B cell (primary cell): ENCODE measurements at regions of chr18 and their contacts with region 1.

Region 1: DNA sequence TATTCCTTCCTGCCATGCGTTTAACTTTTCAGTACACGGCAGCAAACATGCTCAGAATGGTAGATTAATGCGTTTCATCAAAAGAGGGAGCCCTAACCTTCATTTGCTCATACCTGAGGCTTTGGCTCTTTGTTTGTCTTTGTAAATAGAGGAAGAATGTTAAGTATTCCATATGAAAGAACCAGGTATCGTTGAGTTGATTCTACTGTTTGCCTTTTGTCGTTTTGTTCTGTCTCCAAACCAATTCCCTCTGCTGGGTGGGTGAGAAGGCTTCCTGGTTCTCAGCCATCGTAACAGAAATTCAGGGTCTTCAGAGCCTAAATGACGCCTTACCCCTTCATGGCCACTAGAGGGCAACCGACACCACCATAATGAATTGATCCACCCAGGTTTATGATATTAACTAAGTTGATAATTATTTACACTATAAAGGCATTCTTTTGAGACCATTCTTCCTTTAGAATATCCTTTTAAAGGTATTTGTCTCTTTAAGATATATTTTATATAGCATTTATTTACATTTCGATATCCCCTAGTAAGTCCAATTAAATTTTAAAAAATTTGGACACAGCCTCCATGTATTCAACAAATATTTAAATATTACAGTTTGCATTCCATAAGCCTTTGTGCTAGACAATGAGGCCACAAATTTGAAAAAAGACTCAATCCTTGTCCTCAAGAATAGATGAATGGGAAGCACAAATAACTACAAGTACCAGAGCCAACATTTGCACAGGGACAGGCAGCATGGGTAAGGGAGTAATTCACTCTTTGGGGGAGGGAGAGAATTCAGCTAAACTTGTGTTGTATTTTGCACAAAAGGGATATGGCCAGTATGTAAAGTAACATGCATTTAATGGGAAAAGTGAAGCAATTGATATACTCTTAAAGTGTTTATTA is 48.1 kb downstream of the TIMM21 start:
- DNase-seq: peak; percentile 86
- ATAC-seq: peak; percentile 92
- H3K4me3 ChIP-seq: peak overlapping the region; percentile 9 to 79 (median 45)
- H3K4me3 Mint-ChIP-seq: peak overlapping the region; percentile 82
- H3K27ac ChIP-seq: peak overlapping the region in 1 of 2 donors; percentile 71
- H3K27ac Mint-ChIP-seq: peak overlapping the region; percentile 84
- H3K4me1 ChIP-seq: peaks cover 0 to 11% of the 10 kb centered on the region in 2 donors
- H3K4me1 Mint-ChIP-seq: peaks cover 18% of the 10 kb centered on the region
- H3K27me3 ChIP-seq: no peaks in the 10 kb centered on the region
- H3K27me3 Mint-ChIP-seq: peaks cover 17% of the 10 kb centered on the region
- CTCF ChIP-seq: peak; percentile 95

Region 2: GRCh38 chr18:72985686-72986085 is 1210.8 kb before region 1 on chr18:
- CTCF ChIA-PET with region 1: no interaction called
- POLR2A ChIA-PET with region 1: no interaction called
- intact Hi-C with region 1: no loop called
- DNase-seq: no peak
- ATAC-seq: no peak
- H3K4me3 ChIP-seq: no peak overlapping the region
- H3K4me3 Mint-ChIP-seq: no peak overlapping the region
- H3K27ac ChIP-seq: no peak overlapping the region
- H3K27ac Mint-ChIP-seq: no peak overlapping the region
- H3K4me1 ChIP-seq: no peaks in the 10 kb centered on the region
- H3K4me1 Mint-ChIP-seq: no peaks in the 10 kb centered on the region
- H3K27me3 ChIP-seq: no peaks in the 10 kb centered on the region
- H3K27me3 Mint-ChIP-seq: no peaks in the 10 kb centered on the region
- CTCF ChIP-seq: no peak

Region 3: GRCh38 chr18:74147779-74148542 is 48.5 kb before region 1 on chr18 and contains the starts of genes FBXO15 and TIMM21:
- CTCF ChIA-PET with region 1: interaction called, 3 read pairs
- POLR2A ChIA-PET with region 1: no interaction called
- intact Hi-C with region 1: loop called (anchors 5 kb)
- DNase-seq: peak; percentile 98
- ATAC-seq: peak; percentile 84
- H3K4me3 ChIP-seq: peak within 1 kb of the TSS; percentile 75 to 99 (median 89)
- H3K4me3 Mint-ChIP-seq: peak within 1 kb of the TSS; percentile 94
- H3K27ac ChIP-seq: peak within 1 kb of the TSS; percentile 95 to 99
- H3K27ac Mint-ChIP-seq: peak within 1 kb of the TSS; percentile 100
- H3K4me1 ChIP-seq: peaks cover 15 to 21% of the 10 kb centered on the region in 2 donors
- H3K4me1 Mint-ChIP-seq: peaks cover 36% of the 10 kb centered on the region
- H3K27me3 ChIP-seq: no peaks in the 10 kb centered on the region
- H3K27me3 Mint-ChIP-seq: peaks cover 7% of the 10 kb centered on the region
- CTCF ChIP-seq: peak; percentile 1
- total RNA-seq, gene FBXO15: 3.7 and 4.1 TPM in 2 replicates
- total RNA-seq, gene TIMM21: 24.3 and 25.0 TPM in 2 replicates

Region 4: GRCh38 chr18:74264303-74265020 is 68.0 kb after region 1 on chr18:
- CTCF ChIA-PET with region 1: interaction called, 14 read pairs
- POLR2A ChIA-PET with region 1: no interaction called
- intact Hi-C with region 1: no loop called
- DNase-seq: peak; percentile 68
- ATAC-seq: peak; percentile 99
- H3K4me3 ChIP-seq: peak overlapping the region in 1 of 5 experiments; percentile 23
- H3K4me3 Mint-ChIP-seq: peak overlapping the region; percentile 73
- H3K27ac ChIP-seq: peak overlapping the region; percentile 67 to 79
- H3K27ac Mint-ChIP-seq: peak overlapping the region; percentile 95
- H3K4me1 ChIP-seq: peaks cover 6 to 17% of the 10 kb centered on the region in 2 donors
- H3K4me1 Mint-ChIP-seq: peaks cover 35% of the 10 kb centered on the region
- H3K27me3 ChIP-seq: no peaks in the 10 kb centered on the region
- H3K27me3 Mint-ChIP-seq: no peaks in the 10 kb centered on the region
- CTCF ChIP-seq: no peak

Region 5: GRCh38 chr18:74334242-74334893 is 137.9 kb after region 1 on chr18:
- CTCF ChIA-PET with region 1: interaction called, 196 read pairs
- POLR2A ChIA-PET with region 1: no interaction called
- intact Hi-C with region 1: no loop called
- DNase-seq: peak; percentile 72
- ATAC-seq: peak; percentile 88
- H3K4me3 ChIP-seq: no peak overlapping the region
- H3K4me3 Mint-ChIP-seq: peak overlapping the region; percentile 61
- H3K27ac ChIP-seq: peak overlapping the region; percentile 51 to 78
- H3K27ac Mint-ChIP-seq: peak overlapping the region; percentile 92
- H3K4me1 ChIP-seq: peaks cover 22 to 24% of the 10 kb centered on the region in 2 donors
- H3K4me1 Mint-ChIP-seq: peaks cover 45% of the 10 kb centered on the region
- H3K27me3 ChIP-seq: no peaks in the 10 kb centered on the region
- H3K27me3 Mint-ChIP-seq: no peaks in the 10 kb centered on the region
- CTCF ChIP-seq: no peak

Region 6: DNA sequence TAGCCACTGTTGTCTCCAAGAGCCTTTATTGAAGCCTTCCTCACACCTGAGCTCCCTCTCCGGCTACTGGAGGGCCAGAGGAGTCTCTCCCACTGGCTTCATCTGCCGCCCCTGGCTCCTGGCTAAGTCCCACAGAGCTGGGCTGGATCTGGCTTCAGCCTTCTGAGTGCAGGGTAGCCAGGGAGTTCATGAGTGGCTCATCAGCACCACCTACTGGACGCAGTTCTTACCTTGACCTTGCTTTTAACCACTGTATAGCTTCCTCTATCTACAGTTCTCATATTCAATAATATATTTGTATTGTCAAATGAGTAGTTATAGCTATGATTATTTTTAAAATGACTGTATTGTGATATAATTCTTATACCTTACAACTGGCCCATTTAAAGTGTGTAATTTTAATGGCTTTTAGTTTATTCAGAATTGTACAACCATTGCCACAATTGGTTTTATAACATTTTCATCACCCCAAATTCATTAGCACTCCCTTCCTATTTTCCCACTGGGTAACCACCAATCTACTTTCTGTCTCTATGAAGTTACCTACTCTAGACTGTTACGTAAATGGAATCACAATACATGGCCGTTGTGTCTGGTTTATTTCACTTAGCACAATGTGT is 355.6 kb after region 1 on chr18:
- CTCF ChIA-PET with region 1: interaction called, 28 read pairs
- POLR2A ChIA-PET with region 1: no interaction called
- intact Hi-C with region 1: no loop called
- DNase-seq: peak; percentile 81
- ATAC-seq: peak; percentile 96
- H3K4me3 ChIP-seq: no peak overlapping the region
- H3K4me3 Mint-ChIP-seq: no peak overlapping the region
- H3K27ac ChIP-seq: no peak overlapping the region
- H3K27ac Mint-ChIP-seq: no peak overlapping the region
- H3K4me1 ChIP-seq: no peaks in the 10 kb centered on the region
- H3K4me1 Mint-ChIP-seq: no peaks in the 10 kb centered on the region
- H3K27me3 ChIP-seq: no peaks in the 10 kb centered on the region
- H3K27me3 Mint-ChIP-seq: peaks cover 14% of the 10 kb centered on the region
- CTCF ChIP-seq: peak; percentile 92